ENCODE measurements at regions of chr9 and their contacts with region 1.

Region 1: DNA sequence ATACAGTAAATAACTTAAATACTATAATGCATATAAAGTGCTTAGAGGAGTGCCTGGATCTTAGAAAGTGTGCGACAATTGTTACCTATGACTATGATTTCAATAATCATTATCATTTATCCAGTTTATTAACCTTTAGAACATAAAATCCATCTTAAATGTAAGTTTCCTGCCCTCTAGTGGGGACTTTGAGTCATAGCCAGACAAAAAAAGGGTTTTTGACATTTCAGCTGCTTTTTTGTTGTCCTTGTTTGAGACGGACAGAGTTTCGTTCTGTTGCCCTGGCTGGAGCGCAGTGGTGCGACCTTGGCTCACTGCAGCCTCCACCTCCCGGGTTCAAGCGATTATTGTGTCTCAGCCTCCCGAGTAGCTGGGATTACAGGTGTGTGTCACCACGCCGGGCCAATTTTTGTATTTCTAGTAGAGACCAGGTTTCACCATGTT is 9.7 kb upstream of the C9orf152 start:
- DNase-seq: peak; percentile 52
- ATAC-seq: no peak
- H3K4me3 ChIP-seq: no peak overlapping the region
- H3K27ac ChIP-seq: peak overlapping the region; percentile 39
- H3K4me1 ChIP-seq: peaks cover 93% of the 10 kb centered on the region
- H3K27me3 ChIP-seq: no peaks in the 10 kb centered on the region
- CTCF ChIP-seq: peak; percentile 71
- EP300 ChIP-seq: no peak
- POLR2A ChIP-seq: no peak
- RAD21 ChIP-seq: peak; percentile 63

Region 2: GRCh38 chr9:110116543-110116885 is 101.2 kb before region 1 on chr9:
- CTCF ChIA-PET with region 1: no interaction called
- POLR2A ChIA-PET with region 1: no interaction called
- in situ Hi-C with region 1: no loop called
- intact Hi-C with region 1: loop called (anchors 1 kb)
- DNase-seq: no peak
- ATAC-seq: no peak
- H3K4me3 ChIP-seq: no peak overlapping the region
- H3K27ac ChIP-seq: peak overlapping the region; percentile 27
- H3K4me1 ChIP-seq: peaks cover 45% of the 10 kb centered on the region
- H3K27me3 ChIP-seq: no peaks in the 10 kb centered on the region
- CTCF ChIP-seq: no peak
- EP300 ChIP-seq: no peak
- POLR2A ChIP-seq: no peak
- RAD21 ChIP-seq: no peak

Region 3: GRCh38 chr9:110183208-110184145 is 34.2 kb before region 1 on chr9:
- CTCF ChIA-PET with region 1: interaction called, 36 read pairs
- POLR2A ChIA-PET with region 1: interaction called, 12 read pairs
- in situ Hi-C with region 1: loop called (anchors 5 kb)
- intact Hi-C with region 1: loop called (anchors 1 kb)
- DNase-seq: peak; percentile 78
- ATAC-seq: peak; percentile 67
- H3K4me3 ChIP-seq: no peak overlapping the region
- H3K27ac ChIP-seq: no peak overlapping the region
- H3K4me1 ChIP-seq: peaks cover 75% of the 10 kb centered on the region
- H3K27me3 ChIP-seq: no peaks in the 10 kb centered on the region
- CTCF ChIP-seq: peak; percentile 91
- EP300 ChIP-seq: no peak
- POLR2A ChIP-seq: no peak
- RAD21 ChIP-seq: peak; percentile 93

Region 4: DNA sequence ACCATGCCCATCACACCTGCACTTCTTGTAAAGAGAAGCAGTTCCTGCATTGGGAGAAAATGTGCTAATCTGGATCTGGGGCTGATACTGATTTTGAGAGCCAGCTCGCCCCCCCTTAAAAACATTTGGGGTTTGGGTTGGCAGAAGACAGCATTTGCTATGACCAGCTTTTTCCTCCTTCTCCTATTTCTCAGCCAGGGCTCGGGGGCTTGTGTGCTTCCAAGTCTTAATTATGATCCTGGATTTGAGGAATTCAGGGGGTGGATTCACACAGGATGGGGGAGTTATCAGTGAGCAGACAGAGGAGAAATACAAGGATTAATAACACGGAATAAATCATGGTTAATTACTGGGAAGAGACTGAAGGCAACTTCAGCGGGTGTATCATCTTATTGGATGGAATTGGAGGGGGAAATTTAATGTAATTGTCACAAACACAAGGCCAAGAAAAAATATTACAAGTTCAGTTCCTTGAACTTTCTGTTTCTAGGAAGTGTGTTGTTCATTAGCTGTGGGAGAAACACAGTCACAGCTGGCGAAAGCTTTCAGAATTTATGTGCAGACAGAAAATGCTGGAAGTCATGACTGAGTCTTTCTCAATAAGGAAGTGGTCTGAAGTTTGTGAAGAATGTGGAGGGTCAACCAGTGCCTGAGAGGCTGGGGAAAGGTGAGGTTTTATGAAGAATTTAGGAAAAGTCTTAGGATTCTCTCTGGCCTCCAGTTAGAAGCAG is 25.0 kb before region 1 on chr9:
- CTCF ChIA-PET with region 1: no interaction called
- POLR2A ChIA-PET with region 1: interaction called, 31 read pairs
- in situ Hi-C with region 1: no loop called
- intact Hi-C with region 1: no loop called
- DNase-seq: no peak
- ATAC-seq: no peak
- H3K4me3 ChIP-seq: no peak overlapping the region
- H3K27ac ChIP-seq: peak overlapping the region; percentile 34
- H3K4me1 ChIP-seq: peaks cover 87% of the 10 kb centered on the region
- H3K27me3 ChIP-seq: no peaks in the 10 kb centered on the region
- CTCF ChIP-seq: no peak
- EP300 ChIP-seq: no peak
- POLR2A ChIP-seq: no peak
- RAD21 ChIP-seq: no peak

Region 5: GRCh38 chr9:110251212-110251611 is 33.5 kb after region 1 on chr9:
- CTCF ChIA-PET with region 1: no interaction called
- POLR2A ChIA-PET with region 1: interaction called, 30 read pairs
- in situ Hi-C with region 1: no loop called
- intact Hi-C with region 1: loop called (anchors 2 kb)
- DNase-seq: peak; percentile 57
- ATAC-seq: no peak
- H3K4me3 ChIP-seq: no peak overlapping the region; a peak in 1 of 6 replicates
- H3K27ac ChIP-seq: peak overlapping the region; percentile 90
- H3K4me1 ChIP-seq: peaks cover 56% of the 10 kb centered on the region
- H3K27me3 ChIP-seq: no peaks in the 10 kb centered on the region; a peak in 1 of 5 replicates
- CTCF ChIP-seq: no peak
- EP300 ChIP-seq: peak in 1 of 2 experiments; percentile 47; a peak in 1 of 4 replicates
- POLR2A ChIP-seq: no peak
- RAD21 ChIP-seq: no peak

Region 6: GRCh38 chr9:110256380-110257096 is 38.9 kb after region 1 on chr9 and contains the start of gene TXN:
- CTCF ChIA-PET with region 1: no interaction called
- POLR2A ChIA-PET with region 1: interaction called, 30 read pairs
- in situ Hi-C with region 1: no loop called
- intact Hi-C with region 1: loop called (anchors 2 kb)
- DNase-seq: peak; percentile 84
- ATAC-seq: peak; percentile 78
- H3K4me3 ChIP-seq: peak within 1 kb of the TSS; percentile 69 to 95 (median 90)
- H3K27ac ChIP-seq: peak within 1 kb of the TSS; percentile 90
- H3K4me1 ChIP-seq: peaks cover 46% of the 10 kb centered on the region
- H3K27me3 ChIP-seq: no peaks in the 10 kb centered on the region; a peak in 1 of 5 replicates
- CTCF ChIP-seq: no peak
- EP300 ChIP-seq: no peak; a peak in 2 of 4 replicates
- POLR2A ChIP-seq: peak; percentile 90 to 98
- RAD21 ChIP-seq: no peak
- total RNA-seq, gene TXN: 470 and 599 TPM in 2 replicates

Region 7: GRCh38 chr9:110351009-110351467 is 133.4 kb after region 1 on chr9:
- CTCF ChIA-PET with region 1: no interaction called
- POLR2A ChIA-PET with region 1: no interaction called
- in situ Hi-C with region 1: no loop called
- intact Hi-C with region 1: loop called (anchors 1 kb)
- DNase-seq: no peak
- ATAC-seq: no peak
- H3K4me3 ChIP-seq: no peak overlapping the region
- H3K27ac ChIP-seq: no peak overlapping the region
- H3K4me1 ChIP-seq: no peaks in the 10 kb centered on the region
- H3K27me3 ChIP-seq: no peaks in the 10 kb centered on the region
- CTCF ChIP-seq: no peak
- EP300 ChIP-seq: no peak
- POLR2A ChIP-seq: no peak
- RAD21 ChIP-seq: no peak

Region 8: DNA sequence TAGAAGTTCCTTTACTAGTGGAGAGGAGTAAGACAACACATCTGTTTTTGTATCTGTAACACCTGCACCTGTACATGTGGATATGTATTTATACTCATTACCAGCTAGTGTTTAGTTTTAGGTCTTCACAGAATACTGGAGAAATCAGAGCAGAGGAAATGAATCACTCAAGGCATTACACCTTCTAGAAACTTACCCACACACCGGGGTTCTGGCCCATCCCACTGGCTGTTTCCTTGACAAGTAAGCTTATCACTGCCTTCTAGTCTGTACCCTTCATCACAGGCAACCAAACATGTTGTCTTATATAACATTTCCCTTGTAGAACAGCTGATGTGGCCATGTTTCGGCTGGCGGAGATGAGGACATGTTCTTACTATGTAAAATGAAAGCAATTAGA is 285.2 kb after region 1 on chr9:
- CTCF ChIA-PET with region 1: no interaction called
- POLR2A ChIA-PET with region 1: no interaction called
- in situ Hi-C with region 1: no loop called
- intact Hi-C with region 1: no loop called
- DNase-seq: no peak
- ATAC-seq: no peak
- H3K4me3 ChIP-seq: no peak overlapping the region
- H3K27ac ChIP-seq: no peak overlapping the region
- H3K4me1 ChIP-seq: no peaks in the 10 kb centered on the region
- H3K27me3 ChIP-seq: no peaks in the 10 kb centered on the region
- CTCF ChIP-seq: no peak
- EP300 ChIP-seq: no peak
- POLR2A ChIP-seq: no peak
- RAD21 ChIP-seq: no peak

Measured in HepG2 (cell line).